Mammary epithelial cell (primary cell): ENCODE measurements at regions of chr12 and their contacts with region 1.

Region 1: GRCh38 chr12:47021298-47021697 is 58.1 kb upstream of the PCED1B start:
- DNase-seq: peak; percentile 93
- H3K4me3 ChIP-seq: no peak overlapping the region
- H3K27ac ChIP-seq: peak overlapping the region; percentile 61
- H3K4me1 ChIP-seq: peaks cover 51% of the 10 kb centered on the region
- H3K27me3 ChIP-seq: no peaks in the 10 kb centered on the region
- CTCF ChIP-seq: peak; percentile 56 to 67

Region 2: GRCh38 chr12:46071769-46072624 is 949.3 kb before region 1 on chr12:
- CTCF ChIA-PET with region 1: no interaction called
- dilution Hi-C with region 1: no loop called
- in situ Hi-C with region 1: no loop called
- intact Hi-C with region 1: loop called (anchors 2 kb)
- DNase-seq: peak; percentile 70
- H3K4me3 ChIP-seq: no peak overlapping the region
- H3K27ac ChIP-seq: peak overlapping the region; percentile 15
- H3K4me1 ChIP-seq: peaks cover 24% of the 10 kb centered on the region
- H3K27me3 ChIP-seq: no peaks in the 10 kb centered on the region
- CTCF ChIP-seq: peak; percentile 100

Region 3: GRCh38 chr12:46372544-46373110 is 648.7 kb before region 1 on chr12 and contains the start of gene SLC38A2:
- CTCF ChIA-PET with region 1: no interaction called
- dilution Hi-C with region 1: loop called (anchors 25 kb)
- in situ Hi-C with region 1: no loop called
- intact Hi-C with region 1: loop called (anchors 5 kb)
- DNase-seq: peak; percentile 91
- H3K4me3 ChIP-seq: peak within 1 kb of the TSS; percentile 91 to 95 (median 92)
- H3K27ac ChIP-seq: peak within 1 kb of the TSS; percentile 98
- H3K4me1 ChIP-seq: peaks cover 27% of the 10 kb centered on the region
- H3K27me3 ChIP-seq: no peaks in the 10 kb centered on the region
- CTCF ChIP-seq: no peak
- total RNA-seq, gene SLC38A2: 774 to 995 TPM

Region 4: DNA sequence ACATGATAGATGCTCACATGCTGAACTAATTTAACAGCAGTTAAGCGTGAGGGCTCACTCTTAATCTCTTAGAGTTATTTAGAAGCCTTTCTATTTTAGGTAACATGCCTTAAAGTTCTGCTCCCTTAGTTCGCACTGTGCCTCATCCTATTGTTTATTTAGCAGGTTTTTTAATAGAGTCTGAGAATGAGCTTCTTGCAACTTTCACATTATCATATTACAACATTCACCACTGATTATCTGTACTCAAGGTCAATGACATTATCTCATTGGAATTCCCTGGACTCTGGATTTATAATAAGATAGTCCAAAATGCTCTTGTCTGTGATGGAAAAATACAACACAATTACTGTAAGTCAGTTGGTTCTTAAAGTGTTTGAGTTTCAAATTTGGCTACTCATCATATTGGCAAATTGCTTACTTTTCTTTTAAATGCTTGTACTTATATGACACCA is 465.2 kb before region 1 on chr12:
- CTCF ChIA-PET with region 1: no interaction called
- dilution Hi-C with region 1: no loop called
- in situ Hi-C with region 1: loop called in 1 of 2 experiments (anchors 25 kb)
- intact Hi-C with region 1: loop called (anchors 5 kb)
- DNase-seq: peak; percentile 89
- H3K4me3 ChIP-seq: no peak overlapping the region
- H3K27ac ChIP-seq: peak overlapping the region; percentile 99
- H3K4me1 ChIP-seq: peaks cover 84% of the 10 kb centered on the region
- H3K27me3 ChIP-seq: no peaks in the 10 kb centered on the region
- CTCF ChIP-seq: no peak

Region 5: DNA sequence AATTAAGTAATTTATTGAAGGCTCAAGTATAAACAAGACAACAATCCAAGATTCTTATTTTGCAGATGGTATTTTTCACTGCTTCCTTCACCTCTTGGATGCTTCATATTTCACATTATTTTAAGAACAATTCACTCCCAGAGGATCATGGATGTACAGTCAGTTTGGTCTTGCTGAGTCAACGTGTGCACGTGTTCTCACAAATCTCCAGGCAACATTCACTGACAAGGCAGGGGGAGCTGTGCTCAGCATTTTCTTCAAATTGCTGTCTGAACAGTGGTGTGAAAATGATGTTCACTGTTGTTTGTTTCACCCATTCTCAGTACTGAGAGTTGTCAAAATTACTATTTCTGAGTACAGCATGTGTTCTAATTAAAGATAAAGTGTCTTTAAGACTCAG is 77.2 kb before region 1 on chr12:
- CTCF ChIA-PET with region 1: interaction called, 12 read pairs
- dilution Hi-C with region 1: no loop called
- in situ Hi-C with region 1: no loop called
- intact Hi-C with region 1: loop called (anchors 1 kb)
- DNase-seq: peak; percentile 70
- H3K4me3 ChIP-seq: no peak overlapping the region
- H3K27ac ChIP-seq: no peak overlapping the region
- H3K4me1 ChIP-seq: peaks cover 20% of the 10 kb centered on the region
- H3K27me3 ChIP-seq: no peaks in the 10 kb centered on the region
- CTCF ChIP-seq: peak in 1 of 2 donors; percentile 58

Region 6: GRCh38 chr12:46983393-46984266 is 37.7 kb before region 1 on chr12:
- CTCF ChIA-PET with region 1: no interaction called
- dilution Hi-C with region 1: no loop called
- in situ Hi-C with region 1: no loop called
- intact Hi-C with region 1: loop called (anchors 1 kb)
- DNase-seq: peak; percentile 60
- H3K4me3 ChIP-seq: no peak overlapping the region
- H3K27ac ChIP-seq: no peak overlapping the region
- H3K4me1 ChIP-seq: peaks cover 20% of the 10 kb centered on the region
- H3K27me3 ChIP-seq: no peaks in the 10 kb centered on the region
- CTCF ChIP-seq: peak; percentile 85 to 93

Region 7: GRCh38 chr12:47054659-47055058 is 33.4 kb after region 1 on chr12:
- CTCF ChIA-PET with region 1: no interaction called
- dilution Hi-C with region 1: no loop called
- in situ Hi-C with region 1: no loop called
- intact Hi-C with region 1: no loop called
- DNase-seq: no peak
- H3K4me3 ChIP-seq: no peak overlapping the region
- H3K27ac ChIP-seq: no peak overlapping the region
- H3K4me1 ChIP-seq: no peaks in the 10 kb centered on the region
- H3K27me3 ChIP-seq: no peaks in the 10 kb centered on the region
- CTCF ChIP-seq: no peak